Gastrocnemius medialis (tissue), 4 donors: ENCODE measurements at regions of chr3 and their contacts with region 1.

Region 1: GRCh38 chr3:58491506-58492402 is at the start of gene KCTD6:
- DNase-seq: peak; percentile 86 to 89
- ATAC-seq: peak; percentile 88 to 90
- H3K4me3 ChIP-seq: peak within 1 kb of the TSS; percentile 72 to 90 (median 80)
- H3K27ac ChIP-seq: peak within 1 kb of the TSS; percentile 82 to 91 (median 85)
- H3K4me1 ChIP-seq: peaks cover 48 to 49% of the 10 kb centered on the region in 2 donors
- H3K27me3 ChIP-seq: no peaks in the 10 kb centered on the region
- CTCF ChIP-seq: peak; percentile 60 to 82 (median 78)
- POLR2A ChIP-seq: peak; percentile 52 to 73
- total RNA-seq, gene KCTD6: 4.3 to 8.3 (median 5.8) TPM

Region 2: GRCh38 chr3:58237238-58237940 is 254.4 kb before region 1 on chr3 and contains the start of gene ABHD6:
- in situ Hi-C with region 1: no loop called
- intact Hi-C with region 1: loop called (anchors 5 kb)
- DNase-seq: peak; percentile 49 to 51
- ATAC-seq: peak; percentile 91 to 94
- H3K4me3 ChIP-seq: peak within 1 kb of the TSS; percentile 68 to 96 (median 76)
- H3K27ac ChIP-seq: peak within 1 kb of the TSS; percentile 76 to 87 (median 86)
- H3K4me1 ChIP-seq: peaks cover 9 to 14% of the 10 kb centered on the region in 2 donors
- H3K27me3 ChIP-seq: no peaks in the 10 kb centered on the region
- CTCF ChIP-seq: peak in 4 of 5 experiments; percentile 18 to 47 (median 40)
- POLR2A ChIP-seq: peak; percentile 31 to 37
- total RNA-seq, gene ABHD6: 5.8 to 14.0 (median 9.6) TPM

Region 3: DNA sequence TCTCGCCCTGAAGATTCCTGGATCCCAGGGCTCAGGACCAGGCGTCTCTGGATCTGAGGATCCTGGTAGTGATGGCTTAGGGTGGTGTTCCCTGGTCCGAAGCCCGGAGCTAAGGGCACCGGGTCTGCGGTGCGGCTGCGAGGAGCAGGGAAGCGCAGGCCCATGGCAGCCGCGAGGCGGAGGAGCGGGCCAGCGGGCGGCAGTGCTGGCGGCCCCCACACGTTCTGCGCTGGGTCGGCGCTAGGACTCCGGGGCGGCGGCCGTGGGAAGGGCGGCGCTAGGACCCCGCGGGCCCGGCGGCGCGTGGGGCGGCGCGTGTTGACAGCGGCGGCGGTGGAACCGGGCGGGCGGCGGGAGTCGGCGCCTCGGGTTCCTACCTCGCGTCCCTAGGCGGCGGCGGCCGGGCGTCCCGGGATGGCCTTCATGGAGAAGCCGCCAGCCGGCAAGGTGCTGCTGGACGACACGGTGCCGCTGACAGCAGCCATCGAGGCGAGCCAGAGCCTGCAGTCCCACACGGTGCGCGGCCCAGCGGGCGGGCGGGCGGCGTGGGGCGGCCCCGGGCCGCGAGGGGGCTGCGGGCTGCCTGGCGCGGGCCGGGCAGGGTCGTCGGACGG is 159.1 kb before region 1 on chr3 and contains the start of gene PXK:
- in situ Hi-C with region 1: loop called in 2 of 4 experiments (anchors 5 to 10 kb)
- intact Hi-C with region 1: loop called (anchors 1 kb)
- DNase-seq: peak; percentile 55 to 74
- ATAC-seq: peak; percentile 84 to 87
- H3K4me3 ChIP-seq: peak within 1 kb of the TSS; percentile 84 to 92 (median 85)
- H3K27ac ChIP-seq: peak within 1 kb of the TSS; percentile 72 to 78 (median 76)
- H3K4me1 ChIP-seq: peaks cover 27 to 30% of the 10 kb centered on the region in 2 donors
- H3K27me3 ChIP-seq: no peaks in the 10 kb centered on the region
- CTCF ChIP-seq: peak in 3 of 5 experiments; percentile 25 to 54 (median 48)
- POLR2A ChIP-seq: peak; percentile 62 to 69
- total RNA-seq, gene PXK: 21.6 to 33.6 (median 24.4) TPM

Region 4: GRCh38 chr3:58433400-58434169 is 58.2 kb before region 1 on chr3 and contains the start of gene PDHB:
- in situ Hi-C with region 1: no loop called
- intact Hi-C with region 1: loop called (anchors 1 kb)
- DNase-seq: peak; percentile 85 to 89
- ATAC-seq: peak; percentile 98
- H3K4me3 ChIP-seq: peak within 1 kb of the TSS; percentile 64 to 83 (median 76)
- H3K27ac ChIP-seq: peak within 1 kb of the TSS; percentile 87 to 95 (median 90)
- H3K4me1 ChIP-seq: peaks cover 20 to 23% of the 10 kb centered on the region in 2 donors
- H3K27me3 ChIP-seq: no peaks in the 10 kb centered on the region
- CTCF ChIP-seq: peak in 1 of 5 experiments; percentile 12
- POLR2A ChIP-seq: peak; percentile 73 to 79
- total RNA-seq, gene PDHB: 131 to 195 (median 169) TPM

Region 5: DNA sequence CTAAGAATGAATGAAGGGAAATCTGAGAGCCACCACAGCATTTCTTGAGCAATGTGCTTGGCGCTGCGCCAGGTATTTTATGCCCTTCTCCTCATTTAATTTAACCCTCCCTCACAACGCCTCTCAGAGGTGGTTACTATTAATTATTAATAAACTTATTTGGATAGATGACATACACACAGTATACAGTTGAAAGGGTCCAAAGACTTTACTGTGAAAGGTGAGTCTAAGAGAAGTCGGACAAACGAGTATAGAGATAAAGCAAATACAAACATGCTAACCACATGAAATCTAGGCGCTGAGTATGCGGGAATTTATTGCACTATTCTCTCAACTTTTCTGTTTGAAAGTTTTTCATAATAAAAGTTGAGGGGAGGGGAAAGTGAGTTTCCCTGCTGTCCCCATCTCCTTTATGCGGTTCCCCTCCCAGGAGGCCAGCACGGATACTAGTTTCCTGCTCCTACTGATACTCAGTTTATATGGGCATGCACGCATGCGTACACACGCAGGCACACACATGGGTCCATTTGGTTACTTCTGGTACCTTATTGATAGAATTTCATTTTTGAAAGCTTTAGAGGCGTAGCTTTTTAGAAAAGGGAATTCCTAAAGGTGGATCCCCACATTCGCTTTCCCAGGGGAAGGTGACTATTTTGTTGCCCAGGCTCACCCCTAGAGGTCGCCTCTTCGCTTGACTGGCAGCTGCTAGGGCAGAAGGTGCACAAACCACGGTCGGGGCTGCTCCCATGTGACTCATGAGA is 28.4 kb before region 1 on chr3:
- in situ Hi-C with region 1: no loop called
- intact Hi-C with region 1: loop called (anchors 1 kb)
- DNase-seq: peak; percentile 54 to 71
- ATAC-seq: peak; percentile 88 to 93
- H3K4me3 ChIP-seq: peak overlapping the region; percentile 12 to 50 (median 42)
- H3K27ac ChIP-seq: peak overlapping the region; percentile 22 to 61 (median 52)
- H3K4me1 ChIP-seq: peaks cover 17 to 18% of the 10 kb centered on the region in 2 donors
- H3K27me3 ChIP-seq: no peaks in the 10 kb centered on the region
- CTCF ChIP-seq: peak; percentile 65 to 83 (median 74)
- POLR2A ChIP-seq: no peak